GM10248 (cell line): ENCODE measurements at regions of chr19 and their contacts with region 1.

Region 1: DNA sequence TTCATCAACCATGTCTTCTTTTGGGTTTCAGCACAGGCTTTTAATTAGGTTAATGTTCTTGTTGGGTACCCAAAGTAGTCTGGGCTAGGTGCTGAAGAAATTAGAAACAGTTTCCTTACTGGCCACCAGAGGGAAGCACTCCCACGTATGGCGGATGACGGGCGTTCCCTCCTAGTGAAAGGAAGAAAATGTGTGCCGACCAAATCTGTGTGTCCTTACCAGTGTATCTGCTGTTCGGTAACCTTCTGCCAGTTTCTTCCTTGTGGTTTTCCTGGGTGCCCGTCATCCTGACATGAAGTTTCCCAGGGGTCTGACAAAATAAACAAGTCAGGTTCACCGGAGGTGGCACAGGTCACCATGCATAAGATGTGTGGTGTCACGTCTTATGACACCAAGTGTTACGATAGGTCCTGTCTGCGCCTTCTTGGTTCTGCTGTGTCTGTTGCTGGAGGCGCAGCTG is 6.0 kb upstream of the WDR88 start:
- DNase-seq: peak; percentile 81
- CTCF ChIP-seq: peak; percentile 81

Region 2: DNA sequence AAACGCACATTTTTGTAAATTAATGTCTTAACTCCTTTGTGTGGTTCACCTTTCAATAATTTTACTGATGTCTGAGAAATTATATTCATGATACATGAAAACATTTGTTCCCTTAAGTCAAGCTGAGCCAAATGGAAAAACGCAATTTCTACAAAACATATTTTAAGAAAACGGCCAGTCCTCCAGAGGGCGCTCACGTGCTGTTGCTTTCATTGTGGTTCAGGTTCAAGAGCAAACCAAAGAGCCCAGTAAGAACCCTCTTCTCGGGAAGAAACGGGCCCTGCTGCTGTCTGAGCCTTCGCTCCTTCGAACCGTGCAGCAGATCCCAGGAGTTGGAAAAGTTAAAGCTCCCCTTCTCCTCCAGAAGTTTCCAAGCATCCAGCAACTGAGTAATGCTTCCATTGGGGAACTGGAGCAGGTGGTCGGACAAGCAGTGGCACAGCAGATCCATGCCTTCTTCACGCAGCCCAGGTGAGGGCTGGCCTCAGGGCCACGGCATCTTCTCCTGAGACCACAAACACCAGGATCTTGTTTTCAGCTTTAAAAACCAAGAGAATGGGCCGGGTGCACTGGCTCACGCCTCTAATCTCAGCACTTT is 149.7 kb before region 1 on chr19:
- CTCF ChIA-PET with region 1: interaction called, 10 read pairs
- POLR2A ChIA-PET with region 1: no interaction called
- DNase-seq: peak; percentile 57
- CTCF ChIP-seq: peak; percentile 66

Region 3: GRCh38 chr19:33114302-33114701 is 11.7 kb before region 1 on chr19:
- CTCF ChIA-PET with region 1: interaction called, 12 read pairs
- POLR2A ChIA-PET with region 1: no interaction called
- DNase-seq: no peak
- CTCF ChIP-seq: no peak

Region 4: GRCh38 chr19:33176670-33177416 is 50.9 kb after region 1 on chr19:
- CTCF ChIA-PET with region 1: interaction called, 12 read pairs
- POLR2A ChIA-PET with region 1: no interaction called
- DNase-seq: peak; percentile 98
- CTCF ChIP-seq: no peak

Region 5: GRCh38 chr19:33406521-33407139 is 280.7 kb after region 1 on chr19:
- CTCF ChIA-PET with region 1: interaction called, 11 read pairs
- POLR2A ChIA-PET with region 1: no interaction called
- DNase-seq: peak; percentile 89
- CTCF ChIP-seq: peak; percentile 88